Heart left ventricle (tissue), 16 donors: ENCODE measurements at regions of chr6 and their contacts with region 1.

Region 1: GRCh38 chr6:163956571-163957407 is 542.3 kb downstream of the QKI start:
- DNase-seq: peak; percentile 85 to 87 (median 86)
- ATAC-seq: peak; percentile 77 to 91 (median 90)
- H3K4me3 ChIP-seq: no peak overlapping the region
- H3K27ac ChIP-seq: peak overlapping the region in 9 of 12 donors; percentile 2 to 93 (median 32)
- H3K4me1 ChIP-seq: peaks cover 0 to 58% (median 16%) of the 10 kb centered on the region in 12 donors
- H3K27me3 ChIP-seq: no peaks in the 10 kb centered on the region
- CTCF ChIP-seq: peak; percentile 89 to 97 (median 94)
- POLR2A ChIP-seq: no peak

Region 2: DNA sequence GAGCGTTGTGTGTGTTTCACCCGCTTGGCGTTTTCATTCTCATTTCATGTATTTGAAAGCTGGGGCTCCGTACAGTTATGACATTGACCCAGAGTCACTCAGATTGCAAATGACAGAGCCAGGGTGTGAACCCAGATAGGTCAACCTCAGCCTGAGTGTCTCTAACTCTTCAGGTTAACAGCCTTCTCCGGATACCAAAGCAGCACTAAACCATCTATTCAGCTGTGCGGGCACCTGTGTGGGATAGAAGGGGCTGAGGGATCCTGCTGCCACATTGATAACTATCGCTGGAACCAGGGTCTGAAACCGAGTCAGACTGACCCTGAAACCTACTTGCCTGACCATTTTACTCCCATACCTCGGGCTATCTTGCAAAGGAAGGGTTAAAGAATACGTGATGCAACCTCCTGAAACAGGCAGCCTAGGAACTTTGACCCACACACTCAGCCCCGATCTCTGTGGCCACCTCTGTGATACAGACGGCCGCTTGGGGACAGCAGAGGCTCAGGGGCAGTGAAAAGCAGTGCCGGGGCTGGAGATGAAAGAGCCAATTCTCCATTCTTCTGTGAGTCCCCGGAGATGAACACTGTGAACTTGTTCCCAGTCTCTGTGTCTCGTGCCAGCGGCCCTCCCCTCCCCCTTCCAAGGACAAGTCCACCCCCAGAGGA is 775.8 kb before region 1 on chr6:
- intact Hi-C with region 1: loop called (anchors 2 to 10 kb)
- DNase-seq: peak; percentile 80 to 87 (median 84)
- ATAC-seq: peak; percentile 93 to 97 (median 96)
- H3K4me3 ChIP-seq: peak overlapping the region in 6 of 12 donors; percentile 13 to 33 (median 16)
- H3K27ac ChIP-seq: peak overlapping the region in 5 of 12 donors; percentile 28 to 56 (median 40)
- H3K4me1 ChIP-seq: peaks cover 0 to 29% (median 13%) of the 10 kb centered on the region in 12 donors
- H3K27me3 ChIP-seq: no peaks in the 10 kb centered on the region
- CTCF ChIP-seq: peak; percentile 75 to 94 (median 90)
- POLR2A ChIP-seq: no peak

Region 3: GRCh38 chr6:163419413-163420288 is 537.1 kb before region 1 on chr6:
- intact Hi-C with region 1: loop called in 8 of 10 experiments (anchors 2 to 5 kb)
- DNase-seq: no peak
- ATAC-seq: no peak
- H3K4me3 ChIP-seq: peak overlapping the region; percentile 1 to 95 (median 83)
- H3K27ac ChIP-seq: peak overlapping the region; percentile 81 to 100 (median 98)
- H3K4me1 ChIP-seq: peaks cover 13 to 78% (median 47%) of the 10 kb centered on the region in 12 donors
- H3K27me3 ChIP-seq: no peaks in the 10 kb centered on the region
- CTCF ChIP-seq: peak in 1 of 12 donors; percentile 10
- POLR2A ChIP-seq: no peak

Region 4: DNA sequence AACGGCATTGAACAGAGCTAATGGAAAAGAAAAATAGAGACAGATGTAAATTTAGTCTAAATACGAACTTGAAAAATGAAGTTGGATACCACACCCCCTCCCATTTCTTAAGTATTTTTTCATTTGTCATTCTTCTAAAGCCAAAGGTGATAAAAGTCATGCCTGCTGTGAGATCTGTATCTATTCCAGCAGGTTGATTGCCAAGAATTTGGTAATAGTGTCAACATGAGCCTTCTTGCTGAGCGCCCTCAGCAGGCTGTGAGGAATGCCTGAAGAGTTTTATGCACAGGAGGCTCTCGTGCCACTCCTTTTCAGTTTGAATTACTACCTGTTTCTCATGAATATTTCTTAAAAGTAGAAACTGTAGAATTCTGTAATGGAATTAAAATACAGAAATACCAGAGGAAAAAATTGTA is 376.9 kb before region 1 on chr6:
- intact Hi-C with region 1: loop called in 8 of 10 experiments (anchors 5 to 10 kb)
- DNase-seq: peak in 1 of 5 donors; percentile 29
- ATAC-seq: peak in 3 of 4 donors; percentile 19 to 44 (median 42)
- H3K4me3 ChIP-seq: no peak overlapping the region
- H3K27ac ChIP-seq: peak overlapping the region in 6 of 12 donors; percentile 3 to 60 (median 32)
- H3K4me1 ChIP-seq: peaks cover 0 to 38% (median 16%) of the 10 kb centered on the region in 12 donors
- H3K27me3 ChIP-seq: no peaks in the 10 kb centered on the region
- CTCF ChIP-seq: peak in 5 of 12 donors; percentile 17 to 32 (median 24)
- POLR2A ChIP-seq: no peak

Region 5: DNA sequence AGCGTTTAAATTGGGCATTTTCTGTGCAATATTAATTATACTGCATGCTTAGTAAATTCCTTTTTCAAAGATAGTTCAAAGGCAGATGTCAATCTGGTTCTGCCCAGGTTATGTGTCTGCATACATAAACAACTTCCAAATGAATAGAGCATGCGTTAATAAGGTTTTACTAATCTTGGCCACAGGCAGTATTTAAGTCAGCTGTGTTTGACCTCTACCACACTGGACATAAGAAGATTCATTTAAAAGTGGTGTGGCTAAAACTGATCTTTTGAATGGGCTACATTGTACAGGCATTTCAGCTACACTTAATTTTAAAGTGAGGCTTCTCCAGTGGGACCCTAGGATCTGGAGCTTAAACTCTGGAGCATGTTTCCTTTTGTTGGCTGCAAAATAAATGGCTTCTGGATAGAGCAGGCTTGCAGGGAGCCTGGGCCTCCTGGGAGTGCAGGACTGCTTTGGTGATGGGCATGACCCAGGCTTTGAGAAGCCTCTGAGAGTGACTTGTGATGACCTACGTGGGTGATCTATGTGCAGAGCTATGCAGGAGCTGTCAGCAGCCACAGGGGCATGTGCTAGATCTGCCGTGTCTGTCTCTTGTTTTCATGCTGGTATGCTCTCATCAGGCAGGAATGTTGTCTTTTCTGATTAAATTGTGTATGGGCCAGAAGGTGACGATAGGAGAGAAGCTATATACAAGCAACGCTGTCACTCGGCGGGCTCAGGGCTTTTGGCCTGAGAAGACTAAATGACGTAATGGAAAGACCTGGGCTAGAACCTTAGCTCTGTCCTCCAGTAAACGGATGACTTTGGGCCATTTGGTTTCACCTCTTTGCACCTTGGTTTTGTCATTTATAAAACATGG is 211.0 kb before region 1 on chr6:
- intact Hi-C with region 1: loop called in 4 of 10 experiments (anchors 5 to 10 kb)
- DNase-seq: peak in 4 of 5 donors; percentile 70 to 89 (median 84)
- ATAC-seq: peak; percentile 94 to 96 (median 95)
- H3K4me3 ChIP-seq: no peak overlapping the region
- H3K27ac ChIP-seq: peak overlapping the region; percentile 32 to 85 (median 78)
- H3K4me1 ChIP-seq: peaks cover 0 to 53% (median 19%) of the 10 kb centered on the region in 12 donors
- H3K27me3 ChIP-seq: no peaks in the 10 kb centered on the region
- CTCF ChIP-seq: no peak
- POLR2A ChIP-seq: no peak

Region 6: GRCh38 chr6:164927288-164928056 is 970.7 kb after region 1 on chr6:
- intact Hi-C with region 1: loop called in 2 of 10 experiments (anchors 5 to 10 kb)
- DNase-seq: peak; percentile 61 to 85 (median 61)
- ATAC-seq: peak; percentile 83 to 96 (median 92)
- H3K4me3 ChIP-seq: peak overlapping the region in 3 of 12 donors; percentile 8 to 28 (median 18)
- H3K27ac ChIP-seq: no peak overlapping the region
- H3K4me1 ChIP-seq: peaks cover 0 to 8% (median 2%) of the 10 kb centered on the region in 12 donors
- H3K27me3 ChIP-seq: no peaks in the 10 kb centered on the region
- CTCF ChIP-seq: peak; percentile 93 to 100 (median 98)
- POLR2A ChIP-seq: no peak